Tibial artery (tissue), 4 donors: ENCODE measurements at regions of chr2 and their contacts with region 1.

Region 1: GRCh38 chr2:149597668-149598326 is 10.2 kb upstream of the MMADHC start:
- DNase-seq: peak in 1 of 2 donors; percentile 30
- H3K4me3 ChIP-seq: peak overlapping the region; percentile 34 to 37
- H3K27ac ChIP-seq: no peak overlapping the region
- H3K4me1 ChIP-seq: peaks cover 0 to 5% (median 2%) of the 10 kb centered on the region in 4 donors
- H3K27me3 ChIP-seq: no peaks in the 10 kb centered on the region
- CTCF ChIP-seq: peak; percentile 72 to 85

Region 2: DNA sequence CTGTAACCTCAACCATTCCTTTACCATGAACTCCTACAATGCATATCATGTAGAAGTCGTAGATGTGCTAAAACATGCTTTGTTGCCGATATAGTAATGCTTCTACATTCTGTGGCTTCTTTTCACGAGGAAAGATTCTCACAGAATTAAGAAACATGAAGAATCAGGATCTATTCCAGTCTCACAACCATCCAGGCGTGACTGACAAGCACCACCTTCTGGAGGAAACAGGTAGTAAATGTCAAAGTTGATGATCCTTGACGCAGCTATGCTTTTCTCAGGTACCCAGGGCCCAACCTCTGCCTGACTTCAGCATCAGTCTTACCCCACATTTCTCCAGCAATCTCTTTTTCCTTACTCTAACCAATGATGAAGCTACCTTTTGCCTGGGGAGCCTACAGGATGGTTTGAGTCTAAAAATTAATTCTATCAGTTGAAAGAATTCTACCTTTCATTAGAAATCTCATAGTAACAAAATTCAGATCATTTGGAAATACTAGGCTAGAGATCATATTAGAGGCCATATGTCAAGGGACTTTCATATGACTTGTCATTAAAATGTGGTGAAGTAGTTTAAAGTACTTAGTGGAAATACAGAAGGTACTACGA is 1013.0 kb after region 1 on chr2:
- intact Hi-C with region 1: loop called (anchors 10 kb)
- DNase-seq: no peak
- H3K4me3 ChIP-seq: no peak overlapping the region
- H3K27ac ChIP-seq: no peak overlapping the region
- H3K4me1 ChIP-seq: peaks cover 0 to 4% (median 2%) of the 10 kb centered on the region in 4 donors
- H3K27me3 ChIP-seq: no peaks in the 10 kb centered on the region
- CTCF ChIP-seq: peak; percentile 46 to 54

Region 3: DNA sequence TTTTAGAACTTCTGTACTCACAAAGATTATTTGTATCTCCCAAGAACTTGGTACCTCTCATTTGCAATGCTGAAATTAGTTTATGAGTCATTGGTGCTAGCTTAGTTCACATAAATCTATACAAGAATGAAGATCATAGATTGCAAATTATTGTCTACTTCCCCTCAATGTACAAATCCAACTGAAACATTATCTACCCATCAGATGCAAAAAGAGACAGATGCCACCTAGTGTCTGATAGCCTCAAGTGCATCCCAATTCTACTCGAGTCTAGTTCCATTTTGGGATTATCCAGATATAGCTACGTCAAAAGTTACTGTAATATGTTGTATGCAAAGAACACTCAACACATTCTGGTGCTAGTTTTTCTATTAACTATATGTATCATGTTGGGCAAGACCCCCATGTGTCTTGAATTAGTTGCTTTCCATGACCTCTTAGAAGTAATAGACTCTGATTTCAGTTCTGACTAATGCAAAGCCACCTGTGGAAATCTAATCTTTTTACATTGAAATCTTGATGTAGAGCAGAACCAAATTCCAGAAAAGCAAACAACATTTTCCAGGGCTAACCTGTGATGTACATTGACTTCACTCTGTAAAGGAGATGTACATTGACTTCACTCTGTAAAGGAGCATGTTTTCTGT is 1453.9 kb after region 1 on chr2:
- intact Hi-C with region 1: loop called (anchors 5 kb)
- DNase-seq: peak in 1 of 2 donors; percentile 46
- H3K4me3 ChIP-seq: no peak overlapping the region
- H3K27ac ChIP-seq: no peak overlapping the region
- H3K4me1 ChIP-seq: no peaks in the 10 kb centered on the region
- H3K27me3 ChIP-seq: no peaks in the 10 kb centered on the region
- CTCF ChIP-seq: peak; percentile 76 to 82

Region 4: DNA sequence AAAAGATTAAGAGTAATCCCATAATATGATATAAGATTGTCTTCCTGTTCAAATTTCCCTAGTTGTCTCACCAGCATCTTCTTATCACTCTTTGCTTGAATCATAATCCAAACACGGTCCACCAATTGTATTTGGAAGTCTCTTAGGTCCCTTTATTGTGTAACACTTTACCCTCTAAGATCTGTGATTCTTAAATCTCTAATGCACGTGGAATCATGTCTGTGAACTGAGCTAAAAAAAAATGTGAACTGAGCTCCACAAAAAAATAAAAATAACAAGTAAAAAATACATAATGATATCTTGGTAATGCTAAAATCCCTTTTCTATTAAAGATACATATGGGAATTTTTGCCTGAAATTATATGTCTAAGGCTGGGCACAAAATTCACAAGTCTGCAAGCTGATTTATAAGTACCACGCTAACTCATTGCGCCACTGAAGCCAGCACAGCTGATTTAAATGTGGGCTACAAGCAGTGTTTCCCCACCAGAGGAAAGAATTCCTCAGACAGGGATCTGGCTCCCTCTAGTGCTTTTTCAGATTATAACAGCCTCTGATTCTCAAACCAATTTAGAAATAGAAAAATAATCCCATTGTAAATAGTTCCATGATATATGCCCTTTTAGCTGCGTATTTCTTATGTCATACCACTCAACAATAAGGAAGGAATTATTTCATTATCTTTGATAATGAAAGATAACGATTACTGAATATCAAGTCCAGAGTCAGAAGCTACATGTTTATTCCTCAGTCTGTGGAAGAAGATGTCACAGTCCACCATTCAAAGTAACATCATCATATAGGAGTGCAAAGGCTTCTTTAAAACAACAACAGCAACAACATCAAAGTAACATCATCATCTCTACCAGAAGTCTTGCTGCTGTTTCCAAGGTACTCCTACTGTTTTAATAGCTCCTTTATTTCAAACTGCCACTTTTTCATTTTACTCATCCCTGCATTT is 1641.0 kb after region 1 on chr2:
- intact Hi-C with region 1: loop called (anchors 10 kb)
- DNase-seq: peak in 1 of 2 donors; percentile 72
- H3K4me3 ChIP-seq: no peak overlapping the region
- H3K27ac ChIP-seq: no peak overlapping the region
- H3K4me1 ChIP-seq: peaks cover 0 to 3% (median 0%) of the 10 kb centered on the region in 4 donors
- H3K27me3 ChIP-seq: no peaks in the 10 kb centered on the region
- CTCF ChIP-seq: peak; percentile 91 to 92